A673 (cell line): ENCODE measurements at regions of chr1 and their contacts with region 1.

Region 1: GRCh38 chr1:96966536-96967138 is 245.1 kb downstream of the PTBP2 start:
- DNase-seq: peak; percentile 86
- H3K4me3 ChIP-seq: no peak overlapping the region
- H3K27ac ChIP-seq: peak overlapping the region; percentile 58
- H3K4me1 ChIP-seq: peaks cover 20% of the 10 kb centered on the region
- H3K27me3 ChIP-seq: no peaks in the 10 kb centered on the region
- CTCF ChIP-seq: peak; percentile 95

Region 2: GRCh38 chr1:96721416-96722160 is 245.0 kb before region 1 on chr1 and contains the start of gene PTBP2:
- CTCF ChIA-PET with region 1: no interaction called
- POLR2A ChIA-PET with region 1: no interaction called
- intact Hi-C with region 1: no loop called
- DNase-seq: peak; percentile 93
- H3K4me3 ChIP-seq: peak within 1 kb of the TSS; percentile 99
- H3K27ac ChIP-seq: peak within 1 kb of the TSS; percentile 96
- H3K4me1 ChIP-seq: peaks cover 9% of the 10 kb centered on the region
- H3K27me3 ChIP-seq: no peaks in the 10 kb centered on the region
- CTCF ChIP-seq: no peak
- total RNA-seq, gene PTBP2: 29.1 and 32.9 TPM in 2 replicates

Region 3: DNA sequence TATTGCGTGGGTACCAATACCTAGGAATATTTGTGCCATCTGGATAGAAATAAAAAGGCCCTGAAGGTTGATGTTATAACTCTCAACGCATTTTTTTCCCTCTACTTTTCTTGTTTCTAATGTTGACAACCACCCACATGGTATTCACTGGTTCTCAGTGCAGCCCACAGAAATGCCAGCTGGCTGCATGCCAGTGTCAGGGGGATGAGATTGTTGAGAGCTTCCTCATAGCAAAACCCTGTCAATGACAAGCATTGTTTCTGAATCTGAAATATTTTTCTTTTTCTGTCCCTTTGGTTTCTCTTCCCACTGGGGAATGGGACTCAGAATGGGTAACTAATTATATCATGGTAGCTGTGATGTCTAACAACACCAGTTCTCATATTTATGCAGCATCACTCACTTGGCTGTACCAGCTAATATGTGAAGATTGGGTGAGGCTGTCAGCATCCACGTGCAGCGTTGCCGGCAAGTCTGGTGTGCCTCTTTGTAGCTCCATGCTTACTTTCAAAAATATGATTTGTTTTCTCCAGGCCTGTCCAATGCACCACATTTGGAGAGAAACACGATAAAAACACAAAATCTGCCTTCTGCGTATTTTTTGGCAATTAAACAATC is 39.5 kb after region 1 on chr1:
- CTCF ChIA-PET with region 1: no interaction called
- POLR2A ChIA-PET with region 1: no interaction called
- intact Hi-C with region 1: loop called (anchors 1 kb)
- DNase-seq: peak; percentile 63
- H3K4me3 ChIP-seq: no peak overlapping the region
- H3K27ac ChIP-seq: no peak overlapping the region
- H3K4me1 ChIP-seq: peaks cover 15% of the 10 kb centered on the region
- H3K27me3 ChIP-seq: no peaks in the 10 kb centered on the region
- CTCF ChIP-seq: no peak

Region 4: GRCh38 chr1:97137862-97138514 is 171.4 kb after region 1 on chr1:
- CTCF ChIA-PET with region 1: no interaction called
- POLR2A ChIA-PET with region 1: no interaction called
- intact Hi-C with region 1: loop called (anchors 5 kb)
- DNase-seq: peak; percentile 94
- H3K4me3 ChIP-seq: peak overlapping the region; percentile 17
- H3K27ac ChIP-seq: peak overlapping the region; percentile 55
- H3K4me1 ChIP-seq: peaks cover 16% of the 10 kb centered on the region
- H3K27me3 ChIP-seq: no peaks in the 10 kb centered on the region
- CTCF ChIP-seq: peak; percentile 80

Region 5: GRCh38 chr1:97210307-97210706 is 243.7 kb after region 1 on chr1:
- CTCF ChIA-PET with region 1: no interaction called
- POLR2A ChIA-PET with region 1: no interaction called
- intact Hi-C with region 1: no loop called
- DNase-seq: no peak
- H3K4me3 ChIP-seq: no peak overlapping the region
- H3K27ac ChIP-seq: no peak overlapping the region
- H3K4me1 ChIP-seq: no peaks in the 10 kb centered on the region
- H3K27me3 ChIP-seq: no peaks in the 10 kb centered on the region
- CTCF ChIP-seq: no peak

Region 6: GRCh38 chr1:97989094-97989680 is 1022.5 kb after region 1 on chr1:
- CTCF ChIA-PET with region 1: no interaction called
- POLR2A ChIA-PET with region 1: no interaction called
- intact Hi-C with region 1: no loop called
- DNase-seq: no peak
- H3K4me3 ChIP-seq: no peak overlapping the region
- H3K27ac ChIP-seq: no peak overlapping the region
- H3K4me1 ChIP-seq: no peaks in the 10 kb centered on the region
- H3K27me3 ChIP-seq: no peaks in the 10 kb centered on the region
- CTCF ChIP-seq: no peak